ENCODE measurements at regions of chr10 and their contacts with region 1.

Region 1: GRCh38 chr10:124961248-124961570 is 19.3 kb downstream of the ZRANB1 start:
- H3K4me3 Mint-ChIP-seq: no peak overlapping the region
- H3K27ac Mint-ChIP-seq: no peak overlapping the region
- H3K4me1 Mint-ChIP-seq: peaks cover 36% of the 10 kb centered on the region
- H3K27me3 Mint-ChIP-seq: no peaks in the 10 kb centered on the region

Region 2: GRCh38 chr10:124928087-124928486 is 33.1 kb before region 1 on chr10:
- intact Hi-C with region 1: loop called (anchors 5 kb)
- H3K4me3 Mint-ChIP-seq: no peak overlapping the region
- H3K27ac Mint-ChIP-seq: no peak overlapping the region
- H3K4me1 Mint-ChIP-seq: peaks cover 36% of the 10 kb centered on the region
- H3K27me3 Mint-ChIP-seq: no peaks in the 10 kb centered on the region

Region 3: GRCh38 chr10:125027871-125028869 is 67.0 kb after region 1 on chr10:
- intact Hi-C with region 1: no loop called
- H3K4me3 Mint-ChIP-seq: no peak overlapping the region
- H3K27ac Mint-ChIP-seq: no peak overlapping the region
- H3K4me1 Mint-ChIP-seq: peaks cover 4% of the 10 kb centered on the region
- H3K27me3 Mint-ChIP-seq: no peaks in the 10 kb centered on the region

Region 4: GRCh38 chr10:125263555-125263954 is 302.3 kb after region 1 on chr10:
- intact Hi-C with region 1: no loop called
- H3K4me3 Mint-ChIP-seq: no peak overlapping the region
- H3K27ac Mint-ChIP-seq: no peak overlapping the region
- H3K4me1 Mint-ChIP-seq: no peaks in the 10 kb centered on the region
- H3K27me3 Mint-ChIP-seq: peaks cover 5% of the 10 kb centered on the region